Cardiac septum (tissue), 1 donor: ENCODE measurements at regions of chr1 and their contacts with region 1.

Region 1: GRCh38 chr1:184215274-184215925 is 163.9 kb downstream of the TSEN15 start:
- DNase-seq: no peak

Region 2: DNA sequence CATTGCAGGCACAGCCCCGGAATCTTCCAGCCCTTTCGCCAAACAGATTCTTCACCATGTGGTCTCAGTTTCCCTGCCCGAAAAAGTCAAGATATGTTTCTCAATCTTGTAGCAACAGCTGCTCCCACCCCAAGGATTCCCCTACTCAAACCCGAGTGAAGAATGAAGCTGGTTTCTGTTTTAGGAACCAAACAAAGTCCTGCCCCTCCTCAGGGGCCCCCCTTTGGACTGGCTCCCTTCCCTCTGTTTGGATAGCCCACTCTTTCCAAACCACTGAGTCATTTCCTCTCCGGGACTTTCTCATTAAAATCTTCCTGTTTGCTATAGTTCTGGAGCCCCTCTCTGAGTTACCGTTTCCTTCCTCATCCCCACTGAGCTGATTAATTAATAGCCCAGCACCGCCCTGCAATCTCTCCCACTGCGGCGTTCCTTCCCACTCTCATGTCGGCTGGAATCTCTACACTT is 62.9 kb before region 1 on chr1:
- intact Hi-C with region 1: loop called (anchors 5 kb)
- DNase-seq: no peak

Region 3: GRCh38 chr1:184315254-184315653 is 99.9 kb after region 1 on chr1:
- intact Hi-C with region 1: no loop called
- DNase-seq: no peak